ENCODE measurements at regions of chr1 and their contacts with region 1.

Region 1: GRCh38 chr1:11719313-11720032 is 16.5 kb upstream of the AGTRAP start:
- DNase-seq: peak; percentile 73 to 90 (median 82)
- ATAC-seq: peak; percentile 53 to 87 (median 84)
- H3K4me3 ChIP-seq: peak overlapping the region in 11 of 12 donors; percentile 14 to 59 (median 44)
- H3K27ac ChIP-seq: peak overlapping the region in 4 of 12 donors; percentile 7 to 87 (median 36)
- H3K4me1 ChIP-seq: peaks cover 0 to 13% (median 9%) of the 10 kb centered on the region in 12 donors
- H3K27me3 ChIP-seq: peaks cover 0 to 11% (median 0%) of the 10 kb centered on the region in 9 donors
- CTCF ChIP-seq: peak; percentile 90 to 99 (median 97)
- POLR2A ChIP-seq: no peak

Region 2: GRCh38 chr1:11045428-11046269 is 673.8 kb before region 1 on chr1:
- intact Hi-C with region 1: loop called in 1 of 10 experiments (anchors 10 kb)
- DNase-seq: no peak
- ATAC-seq: peak in 1 of 4 donors; percentile 18
- H3K4me3 ChIP-seq: no peak overlapping the region
- H3K27ac ChIP-seq: no peak overlapping the region
- H3K4me1 ChIP-seq: no peaks in the 10 kb centered on the region
- H3K27me3 ChIP-seq: no peaks in the 10 kb centered on the region
- CTCF ChIP-seq: no peak
- POLR2A ChIP-seq: no peak

Region 3: GRCh38 chr1:11654137-11654938 is 65.1 kb before region 1 on chr1 and contains the starts of genes FBXO2 and FBXO44:
- intact Hi-C with region 1: loop called in 8 of 10 experiments (anchors 1 to 5 kb)
- DNase-seq: peak in 3 of 5 donors; percentile 50 to 75 (median 50)
- ATAC-seq: peak; percentile 40 to 83 (median 62)
- H3K4me3 ChIP-seq: peak within 1 kb of the TSS; percentile 37 to 89 (median 67)
- H3K27ac ChIP-seq: peak within 1 kb of the TSS in 4 of 12 donors; percentile 43 to 58 (median 52)
- H3K4me1 ChIP-seq: peaks cover 2 to 34% (median 16%) of the 10 kb centered on the region in 12 donors
- H3K27me3 ChIP-seq: peaks cover 0 to 29% (median 10%) of the 10 kb centered on the region in 9 donors
- CTCF ChIP-seq: no peak
- POLR2A ChIP-seq: no peak
- total RNA-seq, gene FBXO2: 0.83 to 7.5 (median 2.1) TPM
- total RNA-seq, gene FBXO44: 9.8 to 19.1 (median 15.1) TPM

Region 4: DNA sequence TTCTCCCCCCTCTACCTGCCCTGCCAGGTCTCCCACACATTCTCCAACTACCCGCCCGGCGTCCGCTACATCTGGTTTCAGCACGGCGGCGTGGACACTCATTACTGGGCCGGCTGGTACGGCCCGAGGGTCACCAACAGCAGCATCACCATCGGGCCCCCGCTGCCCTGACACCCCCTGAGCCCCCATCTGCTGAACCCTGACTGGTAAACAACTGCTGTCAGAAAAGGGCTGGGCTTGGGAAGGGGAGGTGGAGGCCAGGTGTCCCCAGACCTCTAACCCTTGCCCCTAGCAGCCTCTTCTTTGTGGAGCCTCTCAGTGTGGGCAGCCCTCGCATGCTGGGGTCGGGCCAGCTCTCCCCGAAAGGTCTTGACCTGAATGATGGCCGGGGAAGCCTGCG is 58.4 kb before region 1 on chr1:
- intact Hi-C with region 1: loop called in 4 of 10 experiments (anchors 1 to 5 kb)
- DNase-seq: no peak
- ATAC-seq: no peak
- H3K4me3 ChIP-seq: no peak overlapping the region
- H3K27ac ChIP-seq: no peak overlapping the region
- H3K4me1 ChIP-seq: peaks cover 0 to 17% (median 3%) of the 10 kb centered on the region in 12 donors
- H3K27me3 ChIP-seq: no peaks in the 10 kb centered on the region
- CTCF ChIP-seq: no peak
- POLR2A ChIP-seq: no peak

Region 5: DNA sequence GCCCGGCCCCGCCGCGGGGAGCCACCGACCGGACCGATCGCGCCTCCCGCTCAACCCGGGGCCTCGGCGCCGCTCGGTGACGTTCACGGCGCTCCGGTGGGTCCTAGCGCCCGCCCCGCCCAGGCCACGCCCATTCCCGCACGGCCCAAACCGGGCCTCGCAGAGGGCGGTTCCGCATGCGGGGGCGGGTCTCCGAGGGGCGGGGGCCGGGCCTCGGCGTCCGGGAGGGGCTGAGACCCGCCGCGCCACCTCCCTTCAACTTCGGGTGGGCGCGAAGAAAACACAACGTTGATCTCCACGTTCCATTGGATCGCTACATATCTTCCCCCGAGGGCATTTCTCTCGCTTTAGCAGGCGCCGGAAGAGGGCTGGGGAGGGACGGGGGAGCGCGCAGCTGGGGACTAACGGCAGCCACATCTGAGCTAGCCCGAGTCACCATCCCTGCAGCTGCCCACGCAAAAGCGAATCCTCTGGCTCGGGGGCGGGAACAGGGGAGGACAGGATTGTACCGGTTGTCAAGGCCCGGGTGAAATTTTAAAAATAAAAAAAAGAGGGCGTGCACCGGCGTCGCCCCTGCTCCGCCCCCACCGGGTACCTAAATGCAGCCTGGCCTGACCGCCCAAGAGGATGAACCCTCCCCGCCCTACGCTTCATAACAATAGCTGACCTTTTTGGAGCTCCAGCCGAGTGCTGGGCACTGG is 38.3 kb before region 1 on chr1 and contains the start of gene MAD2L2:
- intact Hi-C with region 1: loop called in 2 of 10 experiments (anchors 2 to 5 kb)
- DNase-seq: peak; percentile 90 to 93 (median 91)
- ATAC-seq: peak; percentile 90 to 98 (median 96)
- H3K4me3 ChIP-seq: peak within 1 kb of the TSS; percentile 74 to 97 (median 88)
- H3K27ac ChIP-seq: peak within 1 kb of the TSS in 11 of 12 donors; percentile 74 to 93 (median 80)
- H3K4me1 ChIP-seq: peaks cover 0 to 23% (median 13%) of the 10 kb centered on the region in 12 donors
- H3K27me3 ChIP-seq: peaks cover 0 to 12% (median 0%) of the 10 kb centered on the region in 9 donors
- CTCF ChIP-seq: no peak
- POLR2A ChIP-seq: peak in 1 of 2 donors; percentile 63
- total RNA-seq, gene MAD2L2: 15.9 to 47.1 (median 18.5) TPM

Measured in heart left ventricle (tissue), 16 donors.